Activated naive CD4-positive, alpha-beta T cell treated with anti-CD3 and anti-CD28 coated beads for 36 hours (primary cell): ENCODE measurements at regions of chr12 and their contacts with region 1.

Region 1: GRCh38 chr12:89162704-89163261 is 189.5 kb downstream of the DUSP6 start:
- DNase-seq: peak; percentile 81
- H3K4me3 Mint-ChIP-seq: no peak overlapping the region
- H3K27ac Mint-ChIP-seq: no peak overlapping the region
- H3K4me1 Mint-ChIP-seq: peaks cover 8% of the 10 kb centered on the region
- H3K27me3 Mint-ChIP-seq: no peaks in the 10 kb centered on the region

Region 2: GRCh38 chr12:89051065-89051677 is 111.6 kb before region 1 on chr12:
- CTCF ChIA-PET with region 1: no interaction called
- intact Hi-C with region 1: loop called (anchors 1 kb)
- DNase-seq: peak; percentile 37
- H3K4me3 Mint-ChIP-seq: no peak overlapping the region
- H3K27ac Mint-ChIP-seq: no peak overlapping the region
- H3K4me1 Mint-ChIP-seq: peaks cover 10% of the 10 kb centered on the region
- H3K27me3 Mint-ChIP-seq: no peaks in the 10 kb centered on the region

Region 3: DNA sequence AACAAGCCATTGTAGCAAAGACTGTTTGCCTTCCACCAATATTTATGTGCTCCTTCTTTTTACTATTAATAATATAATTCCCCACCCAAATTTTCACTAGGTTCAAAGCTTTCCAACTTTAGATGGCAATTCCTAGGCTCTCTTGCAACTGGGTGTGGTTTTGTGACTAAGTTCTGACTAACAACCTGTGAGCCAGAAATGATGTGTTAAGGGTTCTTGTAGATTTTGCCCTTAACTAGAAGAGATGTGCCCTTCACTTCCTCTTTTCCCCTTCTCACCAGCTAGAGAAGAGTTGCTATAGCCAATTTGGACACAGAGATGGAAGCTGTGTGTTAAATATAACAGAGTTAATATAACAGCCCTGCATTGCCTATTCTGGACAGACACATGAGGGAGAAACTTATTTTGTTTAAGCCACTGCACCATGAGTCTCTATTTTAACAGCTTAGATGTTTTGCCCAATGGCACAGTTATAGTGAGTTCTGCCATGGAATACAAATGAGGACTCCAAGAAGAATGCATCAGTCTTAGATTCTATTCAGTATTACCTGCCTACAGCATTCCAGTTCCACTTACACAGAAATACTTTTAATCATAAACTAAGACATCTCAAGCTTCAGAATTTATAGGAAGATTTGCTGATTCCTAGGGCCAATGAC is 26.7 kb before region 1 on chr12:
- CTCF ChIA-PET with region 1: no interaction called
- intact Hi-C with region 1: loop called (anchors 1 kb)
- DNase-seq: peak; percentile 9
- H3K4me3 Mint-ChIP-seq: no peak overlapping the region
- H3K27ac Mint-ChIP-seq: no peak overlapping the region
- H3K4me1 Mint-ChIP-seq: peaks cover 22% of the 10 kb centered on the region
- H3K27me3 Mint-ChIP-seq: no peaks in the 10 kb centered on the region

Region 4: GRCh38 chr12:89244536-89244935 is 81.8 kb after region 1 on chr12:
- CTCF ChIA-PET with region 1: no interaction called
- intact Hi-C with region 1: loop called (anchors 1 kb)
- DNase-seq: peak; percentile 57
- H3K4me3 Mint-ChIP-seq: peak overlapping the region; percentile 36
- H3K27ac Mint-ChIP-seq: peak overlapping the region; percentile 73
- H3K4me1 Mint-ChIP-seq: peaks cover 33% of the 10 kb centered on the region
- H3K27me3 Mint-ChIP-seq: no peaks in the 10 kb centered on the region

Region 5: DNA sequence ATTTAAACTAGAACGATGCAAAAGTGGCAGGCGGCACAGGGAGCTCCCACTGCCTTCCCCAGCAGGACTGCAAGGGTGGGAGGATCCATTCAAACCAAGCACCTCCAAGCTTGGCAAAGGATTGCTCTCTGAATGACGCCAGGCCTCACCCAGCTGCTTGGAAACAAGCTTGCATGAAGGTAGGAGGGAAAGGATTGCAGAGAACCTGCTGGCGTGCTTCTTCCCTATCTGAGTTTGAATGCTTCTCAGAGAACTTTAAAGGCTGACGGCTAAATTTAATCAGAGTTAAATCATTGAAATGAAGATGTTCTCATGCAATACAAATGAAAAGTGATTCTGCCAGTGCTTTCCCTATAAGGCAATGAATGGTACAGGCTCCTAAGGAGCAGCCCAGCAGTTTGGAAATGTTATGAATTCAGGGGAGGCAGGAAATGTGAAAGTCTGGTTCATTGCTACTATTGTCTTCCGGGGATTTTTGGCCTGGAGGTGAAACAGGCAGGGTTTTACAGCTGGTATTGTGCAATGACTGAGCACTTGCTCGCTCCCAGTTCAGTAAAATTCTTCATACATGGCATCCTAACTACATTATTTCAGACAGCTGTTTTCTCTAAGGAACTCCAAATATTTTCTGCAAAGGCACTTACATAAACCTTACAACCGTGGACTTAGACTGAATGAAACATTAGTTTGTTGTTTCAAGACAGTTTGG is 221.4 kb after region 1 on chr12:
- CTCF ChIA-PET with region 1: no interaction called
- intact Hi-C with region 1: no loop called
- DNase-seq: no peak
- H3K4me3 Mint-ChIP-seq: no peak overlapping the region
- H3K27ac Mint-ChIP-seq: no peak overlapping the region
- H3K4me1 Mint-ChIP-seq: no peaks in the 10 kb centered on the region
- H3K27me3 Mint-ChIP-seq: no peaks in the 10 kb centered on the region

Region 6: DNA sequence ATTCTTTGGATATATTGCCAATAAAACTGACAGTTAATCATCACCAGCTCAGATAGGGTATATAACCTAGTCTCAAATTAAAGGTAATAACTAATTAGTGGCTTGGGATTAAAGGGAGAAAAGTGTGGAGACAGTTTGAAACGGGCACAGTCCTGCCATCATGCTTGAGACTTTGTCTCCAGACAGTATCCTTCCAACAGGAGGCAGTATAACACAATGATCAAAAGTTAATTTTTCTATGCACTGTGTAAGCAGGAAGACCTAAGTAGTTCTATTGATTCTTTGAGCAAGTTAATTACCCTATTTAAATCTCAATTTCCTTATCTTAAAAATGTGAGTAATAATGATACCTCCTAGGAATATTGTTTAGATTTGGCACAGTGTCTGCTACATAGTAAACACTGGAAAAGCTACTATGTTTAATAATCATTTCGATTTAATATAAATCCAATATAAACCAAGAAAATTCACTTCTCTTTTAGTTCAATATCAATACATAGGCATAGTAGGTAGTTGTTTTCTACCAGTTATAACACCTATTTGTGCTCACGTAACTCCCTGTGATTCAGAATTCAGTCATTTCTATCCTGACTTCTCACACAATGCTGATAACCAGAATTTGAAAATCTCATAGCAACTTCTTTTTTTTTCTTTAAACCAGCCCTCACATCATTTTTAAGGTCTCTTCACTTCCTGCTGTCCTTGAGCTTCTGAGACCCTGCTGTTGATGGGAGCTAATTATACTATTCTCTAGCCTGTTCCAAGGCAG is 308.1 kb after region 1 on chr12:
- CTCF ChIA-PET with region 1: no interaction called
- intact Hi-C with region 1: loop called (anchors 2 kb)
- DNase-seq: no peak
- H3K4me3 Mint-ChIP-seq: no peak overlapping the region
- H3K27ac Mint-ChIP-seq: no peak overlapping the region
- H3K4me1 Mint-ChIP-seq: peaks cover 44% of the 10 kb centered on the region
- H3K27me3 Mint-ChIP-seq: no peaks in the 10 kb centered on the region

Region 7: DNA sequence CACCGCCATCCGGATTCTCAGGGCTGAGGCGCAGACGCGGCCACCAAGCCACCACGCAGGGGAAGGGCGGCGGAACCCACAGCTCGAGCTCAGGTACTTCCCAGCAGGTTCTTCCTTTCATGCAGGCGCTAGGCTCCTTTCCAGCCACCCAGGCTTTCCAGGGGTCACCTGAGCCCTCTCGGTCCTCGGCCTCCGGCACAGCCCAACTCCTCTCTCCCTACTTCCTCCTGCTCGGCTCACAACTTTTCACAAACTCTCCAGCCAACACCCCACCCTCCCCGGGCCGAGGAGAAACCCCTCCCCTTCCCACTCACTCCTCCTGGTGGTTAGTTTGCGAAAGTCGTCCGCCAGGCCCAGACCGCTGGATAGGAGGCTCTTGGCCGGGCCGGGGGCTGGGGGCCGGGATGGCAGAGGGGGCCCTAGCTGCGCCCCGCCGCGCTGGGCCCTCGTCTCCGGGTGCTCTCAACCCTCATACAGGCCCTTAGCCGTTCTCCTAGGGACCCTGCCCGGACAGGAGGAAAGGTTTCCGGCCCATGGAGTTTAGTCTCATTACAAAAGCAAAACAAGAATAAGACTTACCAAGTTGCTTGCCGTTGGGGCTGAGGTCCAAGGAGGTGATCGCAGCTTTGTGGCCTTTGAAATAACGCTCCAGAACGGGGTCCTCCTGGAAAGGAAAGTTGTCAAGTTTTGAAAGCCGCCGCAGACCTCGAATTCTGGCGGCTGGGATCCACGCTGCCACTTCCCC is 361.9 kb after region 1 on chr12 and contains the start of gene GALNT4:
- CTCF ChIA-PET with region 1: no interaction called
- intact Hi-C with region 1: loop called (anchors 2 kb)
- DNase-seq: peak; percentile 80
- H3K4me3 Mint-ChIP-seq: peak within 1 kb of the TSS; percentile 94
- H3K27ac Mint-ChIP-seq: peak within 1 kb of the TSS; percentile 93
- H3K4me1 Mint-ChIP-seq: peaks cover 41% of the 10 kb centered on the region
- H3K27me3 Mint-ChIP-seq: no peaks in the 10 kb centered on the region
- total RNA-seq, gene GALNT4: 2.9 to 3.4 TPM

Region 8: GRCh38 chr12:90280564-90281058 is 1117.8 kb after region 1 on chr12:
- CTCF ChIA-PET with region 1: no interaction called
- intact Hi-C with region 1: loop called (anchors 10 kb)
- DNase-seq: peak; percentile 43
- H3K4me3 Mint-ChIP-seq: no peak overlapping the region
- H3K27ac Mint-ChIP-seq: peak overlapping the region; percentile 56
- H3K4me1 Mint-ChIP-seq: peaks cover 17% of the 10 kb centered on the region
- H3K27me3 Mint-ChIP-seq: peaks cover 9% of the 10 kb centered on the region